OCI-LY7 (cell line): ENCODE measurements at regions of chr6 and their contacts with region 1.

Region 1: GRCh38 chr6:54864272-54864671 is 17.7 kb downstream of the FAM83B start:
- DNase-seq: no peak
- H3K4me3 ChIP-seq: no peak overlapping the region
- H3K27ac ChIP-seq: no peak overlapping the region
- H3K4me1 ChIP-seq: no peaks in the 10 kb centered on the region
- CTCF ChIP-seq: no peak

Region 2: GRCh38 chr6:54892831-54893230 is 28.6 kb after region 1 on chr6:
- CTCF ChIA-PET with region 1: no interaction called
- POLR2A ChIA-PET with region 1: interaction called, 10 read pairs
- intact Hi-C with region 1: no loop called
- DNase-seq: no peak
- H3K4me3 ChIP-seq: no peak overlapping the region
- H3K27ac ChIP-seq: no peak overlapping the region
- H3K4me1 ChIP-seq: no peaks in the 10 kb centered on the region
- CTCF ChIP-seq: no peak